Activated T-helper 2 cell treated with anti-CD3 and anti-CD28 coated beads, Interferon-gamma antibody, Interleukin-2, Interleukin-4, amounts not matched to agents 10 μg/mL and 5 μg/mL and 100 μg/mL, durations not matched to agents 14 hours and 24 hours and 36 hours (primary cell): ENCODE measurements at regions of chr14 and their contacts with region 1.

Region 1: DNA sequence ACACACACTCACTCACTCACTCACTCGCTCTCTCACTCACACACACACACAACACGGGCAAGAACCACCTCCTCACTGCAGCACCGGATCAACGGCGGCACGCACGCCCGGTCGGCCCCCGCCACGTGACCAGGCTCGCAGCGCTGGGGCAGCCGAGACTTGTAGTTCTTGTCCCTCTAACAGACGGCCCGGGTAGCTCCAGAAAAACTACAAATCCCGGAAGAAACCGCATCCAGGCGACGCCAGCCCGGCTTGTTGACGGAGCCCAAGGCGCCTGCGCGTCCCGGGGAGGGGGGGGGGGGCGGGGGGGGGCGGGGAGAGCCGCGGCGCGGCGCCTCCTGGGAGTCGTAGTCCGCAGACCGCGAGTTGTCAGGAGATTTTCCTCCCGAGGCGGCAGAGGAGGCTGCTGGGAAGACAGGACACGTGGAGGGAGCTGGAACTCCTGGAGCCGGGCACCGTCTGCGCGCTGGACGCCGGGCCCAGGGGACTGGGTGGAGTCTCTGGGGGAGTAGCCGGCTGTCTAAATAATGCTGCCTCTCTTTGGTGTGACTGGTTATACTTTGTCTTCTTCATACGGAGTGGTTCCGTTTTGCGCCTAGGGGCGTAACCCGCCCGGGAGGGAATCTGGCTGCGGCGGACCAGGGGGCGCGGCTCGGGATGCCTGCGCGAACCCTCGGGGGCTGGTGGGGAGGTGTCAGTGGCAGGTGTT is at the start of gene MAX:
- DNase-seq: peak; percentile 99
- H3K4me3 Mint-ChIP-seq: peak within 1 kb of the TSS; percentile 92
- H3K27ac Mint-ChIP-seq: peak within 1 kb of the TSS; percentile 94
- H3K4me1 Mint-ChIP-seq: peaks cover 40% of the 10 kb centered on the region
- H3K27me3 Mint-ChIP-seq: peaks cover 6% of the 10 kb centered on the region
- total RNA-seq, gene MAX: 113 and 115 TPM in 2 replicates

Region 2: DNA sequence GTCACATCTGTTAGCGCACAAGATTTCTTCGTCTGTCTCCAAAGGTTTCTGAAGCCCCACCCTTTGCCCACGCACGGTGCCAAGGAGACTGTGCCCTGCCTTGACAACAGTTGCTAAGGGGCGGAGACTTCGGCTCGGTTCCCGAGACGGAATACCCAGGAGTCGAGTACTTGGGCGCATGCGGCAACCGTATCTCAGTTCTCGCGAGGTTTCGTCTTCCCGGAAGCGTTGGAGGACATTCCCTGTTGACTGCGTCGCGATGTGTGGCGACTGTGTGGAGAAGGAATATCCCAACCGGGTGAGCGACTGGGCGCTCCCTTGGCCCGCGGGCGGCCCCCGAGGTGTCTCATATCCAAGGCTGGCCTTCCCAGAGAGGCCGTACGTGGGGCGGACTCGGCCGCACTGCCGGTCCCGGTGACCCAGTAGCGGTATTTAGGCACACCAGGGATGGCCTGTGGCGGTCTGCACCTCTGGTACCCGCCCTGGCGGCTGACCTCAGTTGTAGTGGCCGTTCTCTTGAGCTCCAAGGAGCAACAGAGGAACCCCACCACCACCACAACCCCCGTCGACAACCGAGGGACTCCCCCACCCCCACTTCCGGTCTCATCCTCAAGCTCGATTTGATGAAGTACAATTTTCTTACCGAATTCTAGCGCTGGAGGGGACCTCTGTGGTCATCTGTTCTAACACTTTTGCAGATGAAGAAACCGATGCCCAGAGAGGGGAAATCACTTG is 188.2 kb before region 1 on chr14 and contains the start of gene CHURC1:
- intact Hi-C with region 1: loop called (anchors 5 kb)
- DNase-seq: peak; percentile 92
- H3K4me3 Mint-ChIP-seq: peak within 1 kb of the TSS; percentile 92
- H3K27ac Mint-ChIP-seq: peak within 1 kb of the TSS; percentile 97
- H3K4me1 Mint-ChIP-seq: peaks cover 53% of the 10 kb centered on the region
- H3K27me3 Mint-ChIP-seq: peaks cover 6% of the 10 kb centered on the region
- total RNA-seq, gene CHURC1: 44.4 and 55.3 TPM in 2 replicates

Region 3: DNA sequence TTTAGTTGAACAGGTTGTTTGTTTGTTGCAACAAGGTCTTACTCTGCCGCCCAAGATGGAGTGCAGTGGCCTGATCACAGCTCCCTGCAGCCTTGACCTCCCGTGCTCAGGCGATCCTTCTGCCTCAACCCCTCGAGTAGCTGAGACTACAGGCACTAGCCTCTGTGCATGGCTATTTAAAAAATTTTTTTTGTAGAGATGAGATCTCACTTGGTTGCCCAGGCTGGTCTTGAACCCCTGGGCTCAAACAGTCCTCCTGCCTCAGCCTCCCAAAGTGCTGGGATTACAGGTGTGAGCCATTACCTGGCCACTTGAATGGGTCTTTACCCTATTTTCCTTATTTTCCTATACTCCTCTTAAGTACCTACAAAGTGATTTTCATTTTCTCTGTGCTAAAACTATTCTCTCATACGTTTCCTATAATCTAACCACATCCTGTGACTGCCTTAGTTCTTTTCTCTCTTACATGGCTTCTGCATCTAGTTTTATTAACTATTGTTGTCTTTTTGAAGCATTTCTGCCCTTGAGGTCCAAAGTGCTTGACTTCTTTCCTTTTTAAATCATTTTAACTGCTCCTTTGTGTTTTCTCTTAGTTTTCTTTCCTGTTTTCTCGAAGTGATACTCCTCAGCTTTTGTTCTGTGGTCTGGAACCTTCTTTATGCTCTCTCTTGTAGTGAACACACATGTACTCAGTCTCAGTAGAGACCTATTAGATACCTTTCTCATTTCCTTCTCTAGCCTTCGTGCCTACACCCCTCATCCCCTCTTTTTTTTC is 174.2 kb before region 1 on chr14:
- intact Hi-C with region 1: loop called (anchors 5 kb)
- DNase-seq: no peak
- H3K4me3 Mint-ChIP-seq: no peak overlapping the region
- H3K27ac Mint-ChIP-seq: no peak overlapping the region
- H3K4me1 Mint-ChIP-seq: peaks cover 24% of the 10 kb centered on the region
- H3K27me3 Mint-ChIP-seq: no peaks in the 10 kb centered on the region

Region 4: DNA sequence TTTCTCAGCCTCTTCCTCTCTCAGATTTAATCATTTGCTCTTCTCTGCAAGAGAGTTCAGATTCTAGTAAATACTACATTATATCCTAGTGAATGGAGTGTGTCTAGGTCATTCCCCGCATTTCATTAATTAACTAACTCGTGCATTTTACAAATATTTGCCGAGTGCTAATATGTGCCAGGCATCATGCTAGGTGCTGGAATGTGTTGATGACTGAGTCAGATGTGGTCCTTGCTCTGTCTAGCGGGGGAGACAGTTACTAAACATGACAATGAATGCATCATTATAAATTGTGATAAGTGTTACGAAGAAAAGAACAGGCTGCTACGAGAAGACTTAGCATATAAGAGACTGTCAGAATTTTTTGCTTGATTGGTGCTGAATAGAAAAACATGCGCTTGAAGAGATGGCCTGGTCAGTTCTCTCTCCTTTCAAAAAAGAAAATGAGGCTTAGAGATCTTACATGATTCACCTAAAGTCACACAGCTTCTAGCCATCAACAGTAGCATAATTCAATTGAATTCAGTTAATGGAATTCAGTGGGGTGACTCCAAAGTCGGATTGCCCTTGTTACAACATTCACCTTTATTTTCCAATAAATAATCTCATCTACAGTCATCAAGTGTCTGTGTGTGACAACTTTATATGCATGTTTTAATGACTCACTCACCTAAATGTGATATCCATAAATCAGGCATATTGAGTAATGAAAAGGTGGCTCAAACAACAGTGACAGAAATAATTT is 48.5 kb after region 1 on chr14:
- intact Hi-C with region 1: no loop called
- DNase-seq: no peak
- H3K4me3 Mint-ChIP-seq: no peak overlapping the region
- H3K27ac Mint-ChIP-seq: no peak overlapping the region
- H3K4me1 Mint-ChIP-seq: no peaks in the 10 kb centered on the region
- H3K27me3 Mint-ChIP-seq: peaks cover 12% of the 10 kb centered on the region

Region 5: DNA sequence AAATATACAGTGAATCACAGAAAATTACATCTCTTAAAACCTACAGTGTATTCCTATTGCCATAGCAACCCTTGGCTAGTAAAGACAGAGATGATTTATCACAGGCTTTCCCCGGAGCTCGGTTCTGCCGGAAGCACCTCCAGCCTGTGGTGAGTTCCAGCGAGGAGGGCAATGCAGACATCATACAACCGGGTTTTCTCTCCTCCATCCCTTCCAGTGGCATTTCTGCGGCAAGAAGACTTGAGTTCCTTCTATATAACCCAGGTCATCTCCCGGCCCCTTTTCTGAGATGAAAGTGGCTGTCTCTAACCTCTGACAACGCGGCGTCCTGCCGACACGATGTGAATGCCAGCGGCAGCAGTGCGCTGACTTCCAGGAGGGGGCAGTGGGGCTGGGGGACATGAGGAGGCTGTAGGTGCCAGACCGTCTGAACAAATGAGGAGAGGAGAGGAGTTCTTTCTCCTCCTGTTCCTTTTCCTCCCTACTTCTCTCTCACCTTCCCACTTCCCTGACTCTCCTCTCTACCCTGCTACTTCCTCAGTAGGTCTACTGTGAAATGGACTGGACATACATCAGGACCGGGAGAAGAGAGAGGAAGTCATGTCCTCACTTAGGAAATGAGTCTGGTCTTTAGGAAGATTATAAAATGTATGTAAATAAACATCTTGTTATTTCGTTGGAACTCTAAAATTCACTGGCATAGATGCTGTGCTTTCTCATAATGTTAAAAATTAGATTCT is 68.3 kb after region 1 on chr14:
- intact Hi-C with region 1: loop called (anchors 2 kb)
- DNase-seq: peak; percentile 53
- H3K4me3 Mint-ChIP-seq: peak overlapping the region; percentile 59
- H3K27ac Mint-ChIP-seq: peak overlapping the region; percentile 75
- H3K4me1 Mint-ChIP-seq: peaks cover 33% of the 10 kb centered on the region
- H3K27me3 Mint-ChIP-seq: peaks cover 2% of the 10 kb centered on the region